Mucosa of descending colon (tissue), 3 donors: ENCODE measurements at regions of chr6 and their contacts with region 1.

Region 1: DNA sequence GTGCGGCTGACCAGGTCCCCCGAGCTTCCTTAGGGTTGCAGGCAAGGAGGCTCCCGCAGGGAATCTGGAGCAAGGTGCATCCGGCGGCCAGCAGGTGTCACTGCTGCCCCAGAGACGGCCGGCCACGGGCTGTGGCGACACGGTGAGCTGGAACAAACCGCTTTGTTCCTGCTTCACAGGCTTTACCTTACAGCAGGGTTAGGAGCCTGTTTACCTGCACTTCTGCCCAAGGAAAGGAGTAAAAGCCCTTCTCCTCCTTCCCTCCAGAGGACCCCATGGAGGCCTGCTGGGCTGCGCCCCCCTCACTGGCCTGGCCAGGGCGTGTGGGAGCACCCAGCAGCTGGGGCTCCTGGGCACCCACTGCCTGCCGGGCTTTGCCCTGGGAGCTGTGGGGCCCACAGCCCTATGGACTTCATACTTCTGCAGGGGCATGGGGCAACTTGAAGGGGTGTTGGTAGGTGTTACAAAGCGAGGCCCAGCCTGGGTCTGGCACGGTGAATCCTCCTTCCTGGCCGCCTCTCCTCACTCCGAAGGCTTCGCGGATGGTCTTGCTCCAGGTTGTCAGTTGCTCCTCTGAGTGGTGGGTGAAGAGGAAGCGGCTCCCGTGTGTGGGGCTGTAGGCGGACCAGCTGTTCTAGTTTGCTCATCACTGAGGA is 88.4 kb downstream of the CDC5L start:
- DNase-seq: peak; percentile 79 to 90 (median 86)
- ATAC-seq: peak; percentile 98
- H3K4me3 ChIP-seq: no peak overlapping the region
- H3K4me1 ChIP-seq: peaks cover 3% of the 10 kb centered on the region
- CTCF ChIP-seq: peak; percentile 93

Region 2: GRCh38 chr6:44127186-44128019 is 348.5 kb before region 1 on chr6 and contains the starts of genes MRPL14 and TMEM63B:
- intact Hi-C with region 1: no loop called
- DNase-seq: peak; percentile 89 to 94 (median 92)
- ATAC-seq: peak; percentile 91
- H3K4me3 ChIP-seq: peak within 1 kb of the TSS; percentile 85
- H3K4me1 ChIP-seq: peaks cover 52% of the 10 kb centered on the region
- CTCF ChIP-seq: no peak
- total RNA-seq, gene MRPL14: 41.0 to 57.2 (median 56.8) TPM
- total RNA-seq, gene TMEM63B: 57.0 to 108 (median 79.6) TPM

Region 3: DNA sequence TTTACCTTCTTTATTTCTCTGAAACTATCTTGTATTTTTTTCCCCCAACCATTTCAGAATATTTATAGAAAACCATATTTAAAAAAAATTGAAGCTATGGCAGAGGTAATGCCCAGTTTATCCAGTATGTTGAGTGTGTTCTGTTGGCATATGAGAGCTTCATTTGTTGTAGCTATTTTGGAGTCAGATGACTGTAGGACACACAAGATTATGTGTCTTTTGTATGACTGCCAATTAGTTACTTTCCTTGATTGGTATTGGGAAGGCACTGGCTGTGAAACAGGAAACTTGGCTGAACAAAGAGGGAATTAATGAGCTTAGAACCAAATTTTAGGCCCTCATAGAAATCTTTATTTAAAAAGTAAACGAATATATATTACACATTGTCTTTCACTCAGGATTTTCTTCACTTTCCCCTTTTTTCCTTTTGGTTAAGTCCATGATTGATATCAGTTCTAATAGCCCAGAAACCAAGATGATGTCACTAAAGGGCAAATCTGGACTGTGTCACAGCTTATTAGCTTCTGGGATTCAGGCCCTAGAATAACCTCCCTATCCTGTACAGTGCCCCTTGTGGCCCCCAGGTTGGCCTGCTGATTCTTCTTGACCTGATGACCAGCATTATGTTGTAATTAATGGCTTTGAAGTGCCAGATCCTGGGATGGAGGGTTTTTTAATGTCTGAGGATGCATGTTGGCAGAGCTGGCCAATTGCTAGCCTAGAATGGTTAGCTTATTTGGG is 78.3 kb before region 1 on chr6:
- intact Hi-C with region 1: no loop called
- DNase-seq: no peak
- ATAC-seq: no peak
- H3K4me3 ChIP-seq: no peak overlapping the region
- H3K4me1 ChIP-seq: no peaks in the 10 kb centered on the region
- CTCF ChIP-seq: no peak

Region 4: GRCh38 chr6:45538641-45539547 is 1063.0 kb after region 1 on chr6:
- intact Hi-C with region 1: no loop called
- DNase-seq: no peak
- ATAC-seq: no peak
- H3K4me3 ChIP-seq: no peak overlapping the region
- H3K4me1 ChIP-seq: peaks cover 3% of the 10 kb centered on the region
- CTCF ChIP-seq: no peak

Region 5: DNA sequence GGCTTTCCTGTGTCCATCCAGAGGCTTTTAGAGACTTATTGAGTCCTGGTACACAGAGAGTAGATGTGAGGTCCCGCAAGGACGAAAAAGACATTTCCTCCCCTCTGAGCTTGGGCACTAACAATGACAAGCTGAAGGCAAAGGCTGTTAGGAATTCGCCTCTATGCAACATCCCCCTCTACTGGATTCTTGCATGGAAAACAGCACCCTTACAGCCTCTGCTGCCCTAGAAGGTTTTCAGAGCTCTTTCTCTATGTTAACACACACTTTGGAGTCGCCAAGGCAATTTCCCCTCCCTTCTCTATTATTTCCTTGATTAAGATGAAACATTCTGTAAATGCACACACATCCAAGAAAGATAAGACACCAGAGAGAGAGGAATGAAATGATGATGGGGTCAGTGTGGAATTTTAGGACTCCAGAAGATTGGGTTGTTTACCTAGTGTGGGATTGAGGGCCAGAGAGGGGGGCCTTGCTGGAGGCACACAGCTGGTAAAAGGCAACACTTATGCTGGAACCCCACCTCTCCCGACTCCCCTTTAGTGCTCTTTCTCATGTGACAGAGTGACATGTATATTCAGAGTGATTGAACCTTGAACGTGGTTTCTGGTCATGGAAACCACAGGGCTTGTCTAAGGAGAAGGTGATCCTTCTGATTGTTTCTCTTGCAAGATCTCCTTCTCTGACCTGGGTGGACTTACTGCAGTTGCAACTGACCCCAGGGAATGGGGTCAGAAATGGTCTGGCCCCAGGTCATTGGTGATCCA is 1239.0 kb after region 1 on chr6:
- intact Hi-C with region 1: loop called in 1 of 2 experiments (anchors 10 kb)
- DNase-seq: peak in 1 of 3 donors; percentile 73
- ATAC-seq: peak; percentile 91
- H3K4me3 ChIP-seq: no peak overlapping the region
- H3K4me1 ChIP-seq: no peaks in the 10 kb centered on the region
- CTCF ChIP-seq: peak; percentile 73